ENCODE measurements at regions of chr10 and their contacts with region 1.

Region 1: DNA sequence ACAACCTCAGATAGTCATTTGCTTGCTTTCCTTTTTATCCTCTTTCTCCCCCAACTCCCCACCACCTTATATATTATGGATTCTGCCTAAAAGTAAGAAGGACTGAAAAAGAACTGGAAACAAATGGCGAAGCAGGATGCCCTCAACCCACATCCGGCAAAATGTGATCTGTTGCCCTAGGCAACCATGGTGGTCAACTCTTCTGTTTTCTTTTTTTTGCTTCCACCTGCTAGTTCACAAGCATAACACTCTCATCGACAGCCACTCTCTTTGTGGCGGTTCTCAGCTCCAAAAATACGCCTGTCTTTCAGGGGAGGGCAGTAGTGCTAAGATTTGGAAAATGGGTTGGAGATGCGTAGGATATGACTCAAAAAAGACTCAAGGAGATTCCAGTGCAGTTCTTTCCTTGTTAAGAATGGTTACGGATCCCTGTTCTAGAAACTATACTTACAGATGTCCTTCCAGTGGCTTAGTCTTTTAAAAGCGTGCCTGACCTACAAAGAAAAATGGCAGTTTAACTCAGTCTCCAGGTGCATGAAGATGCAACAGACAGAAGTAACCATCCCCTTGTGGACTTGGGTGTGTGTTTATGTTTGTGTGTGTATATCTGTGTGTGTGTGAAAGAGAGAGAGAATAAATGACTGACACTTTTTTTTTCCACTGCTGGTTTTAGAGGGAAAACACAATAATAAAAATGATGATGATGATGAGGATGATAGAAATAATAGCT is 10.7 kb downstream of the APBB1IP start:
- DNase-seq: peak; percentile 90
- ATAC-seq: peak; percentile 76
- H3K4me3 ChIP-seq: peak overlapping the region; percentile 18 to 61 (median 33)
- H3K4me3 Mint-ChIP-seq: peak overlapping the region; percentile 79
- H3K27ac ChIP-seq: peak overlapping the region; percentile 91 to 96
- H3K27ac Mint-ChIP-seq: peak overlapping the region; percentile 96
- H3K4me1 ChIP-seq: peaks cover 70 to 73% of the 10 kb centered on the region in 2 donors
- H3K4me1 Mint-ChIP-seq: peaks cover 87% of the 10 kb centered on the region
- H3K27me3 ChIP-seq: no peaks in the 10 kb centered on the region
- H3K27me3 Mint-ChIP-seq: no peaks in the 10 kb centered on the region
- CTCF ChIP-seq: no peak

Region 2: DNA sequence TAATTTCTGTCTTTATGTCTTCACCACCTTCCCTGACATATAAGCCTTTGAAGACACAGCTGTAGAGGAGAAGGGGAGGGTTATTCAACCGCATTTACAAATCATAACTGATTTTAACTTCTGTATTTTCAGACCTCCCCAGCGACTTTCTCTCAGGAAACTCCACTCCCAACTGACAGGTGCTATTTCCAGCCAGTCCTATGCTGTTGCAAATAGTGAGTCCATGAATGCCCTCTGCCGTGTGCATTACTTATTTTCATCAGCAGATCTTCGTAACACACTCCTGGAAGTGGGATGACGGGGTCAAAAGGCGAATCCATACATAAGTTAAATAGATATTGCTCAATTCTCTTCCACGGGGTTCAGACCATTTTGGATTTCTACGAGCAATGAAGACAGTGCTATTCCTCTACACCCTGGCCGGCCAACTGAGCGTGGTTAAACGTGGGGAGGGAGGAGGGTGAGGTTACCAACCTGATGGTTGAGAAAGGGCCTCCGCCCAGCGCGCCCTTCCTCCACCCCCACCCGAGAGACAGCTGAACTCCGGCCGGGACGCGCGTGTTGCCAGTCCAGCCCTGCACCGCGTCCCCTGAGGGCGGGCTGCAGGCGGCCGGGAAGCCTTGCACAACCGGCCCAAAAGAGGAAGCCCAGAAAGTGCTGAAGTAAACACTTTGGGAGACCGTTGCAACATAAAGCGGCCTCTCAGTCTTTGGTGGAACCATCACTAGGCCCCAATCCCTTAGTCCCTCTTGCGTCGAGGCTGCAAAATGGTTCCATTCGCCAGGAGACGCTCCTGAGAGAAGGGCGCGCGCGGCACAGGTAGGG is 11.0 kb before region 1 on chr10 and contains the start of gene APBB1IP:
- CTCF ChIA-PET with region 1: interaction called, 3 read pairs
- POLR2A ChIA-PET with region 1: interaction called, 7 read pairs
- intact Hi-C with region 1: loop called (anchors 1 kb)
- DNase-seq: peak; percentile 81
- ATAC-seq: peak; percentile 82
- H3K4me3 ChIP-seq: peak within 1 kb of the TSS; percentile 73 to 89 (median 86)
- H3K4me3 Mint-ChIP-seq: peak within 1 kb of the TSS; percentile 95
- H3K27ac ChIP-seq: peak within 1 kb of the TSS; percentile 82 to 83
- H3K27ac Mint-ChIP-seq: peak within 1 kb of the TSS; percentile 99
- H3K4me1 ChIP-seq: peaks cover 31 to 44% of the 10 kb centered on the region in 2 donors
- H3K4me1 Mint-ChIP-seq: peaks cover 49% of the 10 kb centered on the region
- H3K27me3 ChIP-seq: no peaks in the 10 kb centered on the region
- H3K27me3 Mint-ChIP-seq: no peaks in the 10 kb centered on the region
- CTCF ChIP-seq: no peak
- total RNA-seq, gene APBB1IP: 97.0 and 99.8 TPM in 2 replicates

Region 3: GRCh38 chr10:26468700-26469099 is 19.8 kb after region 1 on chr10:
- CTCF ChIA-PET with region 1: interaction called, 3 read pairs
- POLR2A ChIA-PET with region 1: interaction called, 4 read pairs
- intact Hi-C with region 1: loop called (anchors 2 kb)
- DNase-seq: peak; percentile 31
- ATAC-seq: no peak
- H3K4me3 ChIP-seq: peak overlapping the region in 1 of 5 experiments; percentile 7
- H3K4me3 Mint-ChIP-seq: peak overlapping the region; percentile 81
- H3K27ac ChIP-seq: peak overlapping the region; percentile 26 to 73
- H3K27ac Mint-ChIP-seq: peak overlapping the region; percentile 93
- H3K4me1 ChIP-seq: peaks cover 64 to 86% of the 10 kb centered on the region in 2 donors
- H3K4me1 Mint-ChIP-seq: peaks cover 84% of the 10 kb centered on the region
- H3K27me3 ChIP-seq: no peaks in the 10 kb centered on the region
- H3K27me3 Mint-ChIP-seq: no peaks in the 10 kb centered on the region
- CTCF ChIP-seq: no peak

Region 4: DNA sequence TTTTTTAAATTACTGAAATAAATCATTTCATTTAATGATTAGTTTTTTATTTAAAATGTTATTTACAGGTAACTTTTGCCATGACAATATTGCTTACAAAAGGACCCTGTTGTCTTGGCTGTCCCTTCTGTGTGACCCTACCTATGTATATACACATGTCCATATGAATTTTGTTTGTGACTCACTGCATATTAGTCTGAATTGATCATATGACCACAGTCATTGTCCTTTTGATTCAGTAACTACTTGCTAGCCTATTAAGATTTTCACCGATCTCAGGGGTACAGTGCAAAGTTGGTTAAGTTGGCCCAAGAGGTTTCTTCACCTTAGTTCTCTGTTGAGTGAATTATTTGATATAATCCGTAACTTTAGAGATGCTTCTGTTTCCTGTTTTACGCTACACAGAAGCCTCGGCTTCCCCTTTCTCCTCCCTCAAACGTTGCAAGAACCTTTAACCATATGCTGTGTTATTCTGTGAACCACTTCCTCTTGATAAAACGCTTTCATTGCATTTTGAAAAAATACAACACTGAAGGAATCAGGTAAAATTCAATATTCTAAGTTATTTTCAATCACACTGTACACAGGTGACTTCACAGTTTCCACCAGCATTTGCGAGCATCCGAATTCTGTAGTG is 33.2 kb after region 1 on chr10:
- CTCF ChIA-PET with region 1: interaction called, 11 read pairs
- POLR2A ChIA-PET with region 1: interaction called, 4 read pairs
- intact Hi-C with region 1: loop called (anchors 1 kb)
- DNase-seq: peak; percentile 85
- ATAC-seq: peak; percentile 78
- H3K4me3 ChIP-seq: peak overlapping the region in 4 of 5 experiments; percentile 11 to 58 (median 17)
- H3K4me3 Mint-ChIP-seq: peak overlapping the region; percentile 54
- H3K27ac ChIP-seq: peak overlapping the region; percentile 62 to 86
- H3K27ac Mint-ChIP-seq: peak overlapping the region; percentile 78
- H3K4me1 ChIP-seq: peaks cover 75 to 79% of the 10 kb centered on the region in 2 donors
- H3K4me1 Mint-ChIP-seq: peaks cover 71% of the 10 kb centered on the region
- H3K27me3 ChIP-seq: no peaks in the 10 kb centered on the region
- H3K27me3 Mint-ChIP-seq: no peaks in the 10 kb centered on the region
- CTCF ChIP-seq: no peak

Region 5: DNA sequence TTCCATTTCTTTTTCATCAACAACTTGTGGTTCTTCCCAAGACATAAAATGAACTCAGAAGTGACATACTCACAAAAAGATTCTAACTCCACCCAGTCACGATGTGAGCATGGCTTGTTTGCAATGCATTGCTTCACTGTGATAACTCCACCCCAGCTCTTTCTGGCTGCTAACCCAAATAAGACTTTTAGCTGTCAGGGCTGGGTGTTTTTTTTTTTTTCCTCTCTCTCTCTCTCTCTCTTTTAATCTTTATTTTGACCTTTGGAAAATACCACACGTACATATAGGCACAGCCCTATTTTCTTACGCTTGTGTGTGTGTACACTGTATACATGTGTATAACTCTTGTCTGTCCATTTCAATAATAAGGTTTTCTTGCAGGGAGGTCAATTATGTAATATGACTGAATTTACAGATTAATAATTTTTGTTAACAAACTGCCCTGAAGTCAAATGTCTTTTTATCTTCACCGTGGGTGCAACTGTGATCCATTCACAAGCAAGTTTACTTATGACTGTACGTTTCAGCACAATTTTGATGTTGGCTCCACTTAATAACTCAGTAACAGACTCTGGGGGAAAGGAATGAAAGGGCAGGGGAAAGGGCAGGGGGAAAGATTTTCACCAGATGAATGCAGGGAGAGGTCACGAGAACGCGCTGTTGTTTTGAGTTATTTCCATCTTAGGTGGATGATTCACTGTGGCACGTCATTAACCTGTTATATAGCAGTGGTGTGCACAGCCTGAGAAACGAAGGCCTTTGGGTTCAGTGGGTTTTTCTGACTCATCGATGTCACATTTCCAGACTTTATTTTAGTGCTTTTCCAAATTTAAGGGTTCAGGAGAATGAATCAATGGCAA is 38.4 kb after region 1 on chr10:
- CTCF ChIA-PET with region 1: no interaction called
- POLR2A ChIA-PET with region 1: no interaction called
- intact Hi-C with region 1: loop called (anchors 1 kb)
- DNase-seq: peak; percentile 24
- ATAC-seq: peak; percentile 78
- H3K4me3 ChIP-seq: no peak overlapping the region
- H3K4me3 Mint-ChIP-seq: peak overlapping the region; percentile 74
- H3K27ac ChIP-seq: peak overlapping the region; percentile 36 to 67
- H3K27ac Mint-ChIP-seq: peak overlapping the region; percentile 89
- H3K4me1 ChIP-seq: peaks cover 40 to 43% of the 10 kb centered on the region in 2 donors
- H3K4me1 Mint-ChIP-seq: peaks cover 54% of the 10 kb centered on the region
- H3K27me3 ChIP-seq: no peaks in the 10 kb centered on the region
- H3K27me3 Mint-ChIP-seq: no peaks in the 10 kb centered on the region
- CTCF ChIP-seq: no peak

Region 6: DNA sequence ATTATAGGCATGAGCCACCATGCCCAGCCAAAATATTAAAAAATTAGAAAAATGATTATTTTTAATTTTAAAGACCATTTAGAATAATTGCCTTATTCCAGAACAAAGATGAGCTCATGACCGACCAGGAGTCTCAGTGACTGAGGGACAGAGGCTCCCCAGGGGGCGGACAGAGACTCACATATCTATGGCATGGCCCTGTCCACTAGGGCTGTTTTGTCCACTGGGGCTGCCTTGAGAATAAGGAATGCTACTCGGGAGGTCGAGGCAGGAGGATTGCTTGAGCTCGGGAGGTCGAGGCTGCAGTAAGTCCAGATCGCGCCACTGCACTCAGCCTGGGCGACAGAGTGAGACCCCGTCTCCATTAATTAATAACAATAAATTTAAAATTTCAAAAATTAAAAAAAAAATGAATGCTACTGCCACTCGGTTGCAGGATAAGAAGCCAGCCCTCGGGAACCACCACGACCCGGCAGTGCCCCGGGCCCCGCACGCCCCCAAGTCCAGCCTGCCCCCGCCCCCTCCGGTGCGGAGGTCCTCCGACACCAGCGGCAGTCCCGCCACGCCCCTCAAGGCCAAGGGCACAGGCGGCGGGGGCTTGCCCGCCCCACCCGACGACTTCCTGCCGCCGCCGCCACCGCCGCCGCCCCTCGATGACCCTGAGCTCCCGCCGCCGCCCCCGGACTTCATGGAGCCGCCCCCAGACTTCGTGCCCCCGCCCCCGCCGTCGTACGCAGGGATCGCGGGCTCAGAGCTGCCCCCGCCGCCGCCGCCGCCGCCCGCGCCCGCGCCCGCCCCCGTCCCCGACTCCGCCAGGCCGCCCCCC is 117.9 kb after region 1 on chr10:
- CTCF ChIA-PET with region 1: no interaction called
- POLR2A ChIA-PET with region 1: no interaction called
- intact Hi-C with region 1: no loop called
- DNase-seq: no peak
- ATAC-seq: no peak
- H3K4me3 ChIP-seq: no peak overlapping the region
- H3K4me3 Mint-ChIP-seq: no peak overlapping the region
- H3K27ac ChIP-seq: no peak overlapping the region
- H3K27ac Mint-ChIP-seq: no peak overlapping the region
- H3K4me1 ChIP-seq: no peaks in the 10 kb centered on the region
- H3K4me1 Mint-ChIP-seq: no peaks in the 10 kb centered on the region
- H3K27me3 ChIP-seq: no peaks in the 10 kb centered on the region
- H3K27me3 Mint-ChIP-seq: no peaks in the 10 kb centered on the region
- CTCF ChIP-seq: no peak